ENCODE measurements at regions of chr5 and their contacts with region 1.

Region 1: DNA sequence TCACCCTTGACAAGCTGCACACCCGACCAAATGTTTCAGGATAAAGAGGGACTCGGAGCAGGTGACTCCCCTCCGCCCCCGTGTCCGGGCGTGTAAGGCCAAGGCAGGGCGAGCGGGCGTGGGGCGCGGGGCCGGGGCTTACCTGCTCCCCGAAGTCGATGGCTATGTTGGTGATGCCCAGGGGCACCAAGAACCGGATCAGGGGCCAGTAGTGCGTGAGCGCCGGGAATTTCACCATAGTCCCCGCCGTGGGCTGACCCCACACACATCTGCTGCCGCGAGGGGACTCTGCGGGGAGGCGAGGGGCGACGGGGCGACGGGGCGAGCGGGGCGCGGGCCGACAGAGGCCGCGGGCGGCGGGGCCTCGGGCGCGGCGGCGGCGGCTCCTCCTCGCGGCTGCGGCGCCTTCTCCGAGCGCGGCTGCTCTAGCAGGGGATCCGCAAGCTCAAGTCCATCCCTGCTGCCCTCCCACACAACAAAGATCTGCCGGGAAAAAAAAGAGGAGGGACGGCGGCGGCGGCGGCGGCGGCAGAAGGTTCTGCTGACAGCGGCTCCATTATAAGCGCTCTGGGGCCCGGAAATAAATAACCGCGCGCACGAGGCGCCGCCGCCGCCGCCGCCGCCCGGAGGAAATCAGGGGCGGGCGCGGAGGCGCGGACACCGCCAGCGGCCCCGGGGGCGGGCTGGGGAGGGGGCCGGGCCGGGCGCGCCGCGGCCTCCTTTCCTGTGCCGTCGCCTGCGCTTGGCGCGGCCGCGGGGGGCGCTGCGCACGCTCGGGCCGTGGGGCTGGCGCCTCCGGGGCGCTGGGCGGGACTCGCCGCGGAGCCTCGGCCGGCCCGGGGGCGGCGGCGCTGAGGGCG is at the start of gene ANKH:
- DNase-seq: peak; percentile 85 to 90
- ATAC-seq: peak; percentile 85 to 94 (median 89)
- H3K4me3 ChIP-seq: peak within 1 kb of the TSS; percentile 92
- H3K27ac ChIP-seq: peak within 1 kb of the TSS; percentile 90
- H3K4me1 ChIP-seq: peaks cover 7% of the 10 kb centered on the region
- H3K27me3 ChIP-seq: no peaks in the 10 kb centered on the region
- CTCF ChIP-seq: peak; percentile 40
- total RNA-seq, gene ANKH: 63.0 to 92.8 (median 76.8) TPM

Region 2: GRCh38 chr5:14685757-14686156 is 185.7 kb before region 1 on chr5:
- intact Hi-C with region 1: loop called (anchors 5 to 10 kb)
- DNase-seq: no peak
- ATAC-seq: peak; percentile 58 to 86 (median 68)
- H3K4me3 ChIP-seq: no peak overlapping the region
- H3K27ac ChIP-seq: no peak overlapping the region
- H3K4me1 ChIP-seq: peaks cover 29% of the 10 kb centered on the region
- H3K27me3 ChIP-seq: no peaks in the 10 kb centered on the region
- CTCF ChIP-seq: peak; percentile 68

Region 3: GRCh38 chr5:14727428-14727865 is 144.0 kb before region 1 on chr5:
- intact Hi-C with region 1: loop called (anchors 2 to 10 kb)
- DNase-seq: peak; percentile 71 to 84
- ATAC-seq: peak; percentile 80 to 87 (median 84)
- H3K4me3 ChIP-seq: peak overlapping the region; percentile 4
- H3K27ac ChIP-seq: peak overlapping the region; percentile 75
- H3K4me1 ChIP-seq: peaks cover 56% of the 10 kb centered on the region
- H3K27me3 ChIP-seq: no peaks in the 10 kb centered on the region
- CTCF ChIP-seq: peak; percentile 95

Region 4: DNA sequence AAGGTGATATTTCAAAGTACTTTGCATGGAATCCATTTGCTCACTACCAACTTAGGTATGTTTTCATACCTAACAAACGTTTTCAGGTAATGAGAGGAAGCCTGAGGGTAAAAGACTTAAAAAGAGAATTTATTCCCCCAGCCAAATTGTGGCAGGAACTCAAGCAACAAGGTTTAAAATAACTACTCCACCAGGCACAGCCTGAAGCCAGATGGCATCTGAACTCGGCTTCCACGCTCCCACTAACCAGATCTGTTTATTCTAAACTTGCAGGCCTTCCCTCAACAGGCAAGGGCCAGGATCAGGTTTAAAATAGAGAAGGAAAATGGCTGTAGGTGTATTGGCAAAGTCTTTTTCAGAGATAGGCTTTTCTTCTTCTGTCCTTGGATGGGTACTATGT is 117.5 kb before region 1 on chr5:
- intact Hi-C with region 1: loop called in 1 of 2 experiments (anchors 10 kb)
- DNase-seq: no peak
- ATAC-seq: peak in 3 of 4 donors; percentile 59 to 75 (median 74)
- H3K4me3 ChIP-seq: no peak overlapping the region
- H3K27ac ChIP-seq: peak overlapping the region; percentile 82
- H3K4me1 ChIP-seq: peaks cover 59% of the 10 kb centered on the region
- H3K27me3 ChIP-seq: no peaks in the 10 kb centered on the region
- CTCF ChIP-seq: no peak

Region 5: GRCh38 chr5:14806456-14806855 is 65.0 kb before region 1 on chr5:
- intact Hi-C with region 1: no loop called
- DNase-seq: peak; percentile 51 to 67
- ATAC-seq: peak; percentile 73 to 90 (median 78)
- H3K4me3 ChIP-seq: no peak overlapping the region
- H3K27ac ChIP-seq: peak overlapping the region; percentile 11
- H3K4me1 ChIP-seq: peaks cover 36% of the 10 kb centered on the region
- H3K27me3 ChIP-seq: no peaks in the 10 kb centered on the region
- CTCF ChIP-seq: no peak

Region 6: DNA sequence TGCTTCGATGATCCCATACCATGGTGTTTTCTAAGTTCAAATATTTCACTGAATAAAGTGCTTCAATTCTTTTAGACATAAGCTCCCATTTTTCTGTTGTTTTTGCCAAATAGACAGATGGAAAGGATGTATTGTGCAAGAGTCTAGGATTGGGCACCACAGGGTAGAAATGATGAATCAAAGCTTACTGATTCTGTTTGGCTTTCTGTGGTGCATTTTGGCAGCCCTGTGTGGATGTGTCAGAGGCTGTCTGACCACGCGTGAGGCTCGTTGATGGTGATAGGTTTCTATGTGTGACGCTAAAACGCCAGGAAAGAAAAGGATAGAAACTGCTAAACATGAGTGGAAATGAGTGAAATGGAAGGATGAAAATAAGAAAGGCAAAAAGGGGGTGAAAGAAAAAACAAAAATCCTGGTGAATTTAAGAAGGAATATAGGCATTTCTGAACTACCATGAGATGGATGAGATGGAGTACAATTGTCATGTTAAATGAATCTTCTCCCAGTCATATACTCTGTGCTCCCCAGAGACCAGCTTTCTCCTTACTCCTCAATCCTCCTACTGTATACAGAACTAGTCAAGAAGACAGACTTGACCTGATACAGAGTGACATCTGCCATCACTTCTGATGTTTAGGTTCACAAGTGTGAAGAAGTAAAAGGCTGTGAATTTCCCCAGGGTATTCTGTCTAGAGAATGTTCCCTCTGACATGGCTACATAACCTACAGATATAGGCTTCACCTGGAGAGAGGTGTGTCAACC is 54.3 kb before region 1 on chr5:
- intact Hi-C with region 1: loop called in 1 of 2 experiments (anchors 5 kb)
- DNase-seq: peak; percentile 54 to 66
- ATAC-seq: peak; percentile 60 to 82 (median 78)
- H3K4me3 ChIP-seq: no peak overlapping the region
- H3K27ac ChIP-seq: peak overlapping the region; percentile 34
- H3K4me1 ChIP-seq: peaks cover 55% of the 10 kb centered on the region
- H3K27me3 ChIP-seq: no peaks in the 10 kb centered on the region
- CTCF ChIP-seq: no peak

Region 7: DNA sequence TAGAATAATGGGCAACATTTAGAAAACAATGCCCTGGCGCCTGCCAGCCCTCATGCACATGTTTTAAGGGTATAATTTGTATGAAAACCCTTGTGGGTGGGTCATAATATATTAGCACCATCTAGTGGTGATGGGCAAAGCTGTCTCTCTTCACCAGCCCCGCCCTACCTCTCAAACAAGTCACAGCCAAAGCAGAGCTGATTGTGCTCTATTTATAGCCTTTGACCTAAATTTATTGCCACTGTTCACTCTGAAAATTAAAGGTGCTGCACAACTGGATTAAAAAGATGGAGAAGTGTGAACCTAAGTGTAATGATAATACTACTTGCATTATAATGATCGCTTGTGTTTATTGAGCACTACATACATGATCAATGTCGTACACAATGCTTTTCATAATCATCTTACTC is 132.1 kb after region 1 on chr5:
- intact Hi-C with region 1: loop called (anchors 2 to 5 kb)
- DNase-seq: peak; percentile 26 to 60
- ATAC-seq: peak; percentile 87 to 97 (median 94)
- H3K4me3 ChIP-seq: no peak overlapping the region
- H3K27ac ChIP-seq: no peak overlapping the region
- H3K4me1 ChIP-seq: no peaks in the 10 kb centered on the region
- H3K27me3 ChIP-seq: no peaks in the 10 kb centered on the region
- CTCF ChIP-seq: peak; percentile 88

Measured in psoas muscle (tissue), 8 donors.